ENCODE measurements at regions of chr1 and their contacts with region 1.

Region 1: DNA sequence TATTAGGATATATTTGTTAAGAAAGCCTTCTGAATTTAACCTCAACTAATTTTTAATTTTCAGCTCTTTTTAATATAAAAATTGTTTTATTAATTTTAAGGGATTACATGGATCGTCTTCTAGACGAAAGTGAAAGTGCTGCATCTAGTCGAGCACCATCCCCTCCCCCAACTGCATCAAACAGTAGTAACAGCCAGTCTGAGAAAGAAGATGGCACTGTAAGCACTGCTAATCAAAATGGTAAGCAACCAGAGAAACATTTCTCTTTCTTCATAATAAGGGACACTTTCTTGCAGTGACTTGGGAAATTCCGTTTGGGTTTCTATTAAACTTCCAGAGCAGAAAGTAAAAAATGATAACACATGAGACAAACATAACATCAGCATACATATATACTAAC is 56.9 kb downstream of the MIER1 start:
- DNase-seq: peak; percentile 71
- H3K4me3 Mint-ChIP-seq: peak overlapping the region; percentile 51
- H3K27ac Mint-ChIP-seq: peak overlapping the region; percentile 87
- H3K4me1 Mint-ChIP-seq: peaks cover 50% of the 10 kb centered on the region
- H3K27me3 Mint-ChIP-seq: no peaks in the 10 kb centered on the region

Region 2: DNA sequence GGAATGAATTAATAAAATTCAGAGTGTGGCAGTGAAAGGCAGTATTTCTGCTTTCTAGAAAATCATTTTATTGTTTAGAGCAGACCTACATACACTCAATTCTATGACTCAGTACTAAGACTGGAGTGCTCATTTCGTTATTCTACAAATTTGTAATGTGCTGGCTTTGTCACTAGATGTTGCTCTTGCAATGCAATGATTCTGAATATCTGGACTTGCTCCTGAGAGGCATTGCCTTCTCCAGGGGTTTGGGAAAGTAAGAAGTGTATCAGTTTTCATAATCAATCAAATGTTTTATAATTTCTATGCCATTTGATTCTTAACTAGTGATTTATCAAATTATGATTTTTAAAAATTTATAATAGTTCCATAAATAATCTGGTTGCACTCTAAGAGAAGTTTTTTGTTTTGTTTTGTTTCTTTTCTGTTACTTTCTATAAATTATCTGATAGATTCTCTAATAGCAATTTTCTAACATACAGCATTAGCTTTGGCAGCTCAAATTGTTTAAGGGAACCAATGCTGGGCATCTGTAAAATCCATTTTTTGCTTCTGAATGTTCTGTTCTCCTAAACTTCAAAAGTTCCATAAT is 728.3 kb before region 1 on chr1:
- CTCF ChIA-PET with region 1: no interaction called
- intact Hi-C with region 1: loop called (anchors 5 kb)
- DNase-seq: peak; percentile 39
- H3K4me3 Mint-ChIP-seq: no peak overlapping the region
- H3K27ac Mint-ChIP-seq: no peak overlapping the region
- H3K4me1 Mint-ChIP-seq: peaks cover 48% of the 10 kb centered on the region
- H3K27me3 Mint-ChIP-seq: no peaks in the 10 kb centered on the region

Region 3: GRCh38 chr1:66929999-66930822 is 51.5 kb before region 1 on chr1:
- CTCF ChIA-PET with region 1: no interaction called
- intact Hi-C with region 1: loop called (anchors 2 kb)
- DNase-seq: peak; percentile 92
- H3K4me3 Mint-ChIP-seq: peak overlapping the region; percentile 84
- H3K27ac Mint-ChIP-seq: peak overlapping the region; percentile 92
- H3K4me1 Mint-ChIP-seq: peaks cover 51% of the 10 kb centered on the region
- H3K27me3 Mint-ChIP-seq: no peaks in the 10 kb centered on the region

Region 4: GRCh38 chr1:66996018-66996682 is 14.5 kb after region 1 on chr1:
- CTCF ChIA-PET with region 1: interaction called, 10 read pairs
- intact Hi-C with region 1: no loop called
- DNase-seq: peak; percentile 89
- H3K4me3 Mint-ChIP-seq: no peak overlapping the region
- H3K27ac Mint-ChIP-seq: no peak overlapping the region
- H3K4me1 Mint-ChIP-seq: peaks cover 26% of the 10 kb centered on the region
- H3K27me3 Mint-ChIP-seq: no peaks in the 10 kb centered on the region

Region 5: DNA sequence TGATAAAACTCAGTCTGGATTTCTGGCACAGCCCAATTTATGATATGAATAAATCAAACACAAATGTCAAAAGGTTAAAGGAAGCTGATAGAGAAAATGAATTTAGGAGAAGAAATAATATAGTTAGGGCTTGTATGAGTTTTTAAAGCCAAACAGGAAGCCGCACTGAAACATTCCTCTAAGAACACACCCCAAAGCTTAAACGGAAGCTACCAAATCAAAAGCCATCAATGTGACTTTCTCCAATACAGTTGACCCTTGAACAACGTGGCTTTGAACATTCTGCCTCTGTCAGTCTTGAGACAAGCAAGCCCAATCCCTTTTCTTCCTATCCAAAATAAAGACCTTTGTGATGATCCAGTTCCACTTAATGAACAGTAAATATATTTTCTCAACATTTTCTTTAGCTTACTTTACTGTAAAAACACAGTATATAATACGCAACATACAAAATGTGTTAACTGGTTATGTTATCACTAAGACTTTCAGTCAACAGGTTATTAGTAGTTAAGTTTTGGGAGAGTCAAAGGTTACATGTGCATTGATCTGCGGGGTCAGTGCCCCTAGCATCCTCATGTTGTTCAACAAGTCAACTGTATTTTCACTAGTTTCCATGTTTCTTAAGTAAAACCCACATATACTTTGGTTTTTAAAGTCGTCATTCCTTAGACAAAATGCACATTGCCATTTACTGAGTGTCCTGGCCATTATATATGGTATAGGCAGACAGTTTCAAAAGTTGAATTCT is 437.3 kb after region 1 on chr1:
- CTCF ChIA-PET with region 1: interaction called, 4 read pairs
- intact Hi-C with region 1: loop called (anchors 5 kb)
- DNase-seq: no peak
- H3K4me3 Mint-ChIP-seq: no peak overlapping the region
- H3K27ac Mint-ChIP-seq: peak overlapping the region; percentile 72
- H3K4me1 Mint-ChIP-seq: peaks cover 85% of the 10 kb centered on the region
- H3K27me3 Mint-ChIP-seq: no peaks in the 10 kb centered on the region